ENCODE measurements at regions of chr11 and their contacts with region 1.

Region 1: DNA sequence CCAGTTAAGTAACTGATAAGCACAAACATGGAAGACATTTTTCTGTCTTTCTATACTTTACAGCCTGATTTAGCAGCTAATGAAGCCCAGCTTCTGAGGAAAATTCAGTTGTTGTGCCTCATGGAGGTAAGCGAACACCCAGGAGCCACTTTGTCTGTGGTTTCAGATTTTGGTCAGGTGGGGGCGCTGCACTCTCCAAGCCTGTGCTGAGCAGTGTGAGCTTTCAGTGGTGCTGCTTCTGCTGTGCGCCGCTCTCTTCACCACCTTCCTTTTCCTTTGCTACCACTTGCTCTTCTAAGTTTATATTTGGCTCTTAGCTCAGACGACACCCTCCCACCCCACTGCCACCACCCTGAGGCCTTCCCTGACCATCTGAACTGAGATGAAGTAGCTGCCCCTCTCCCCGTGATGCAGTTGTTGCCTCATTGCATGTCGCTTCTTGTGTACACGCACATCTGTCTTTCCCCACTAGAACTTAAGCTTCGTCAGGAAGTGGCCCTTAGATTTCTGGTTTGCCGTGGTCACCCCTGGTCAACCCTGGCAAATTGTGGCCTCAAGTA is 14.0 kb downstream of the PSMD13 start:
- DNase-seq: peak; percentile 91
- H3K4me3 Mint-ChIP-seq: no peak overlapping the region
- H3K27ac Mint-ChIP-seq: peak overlapping the region; percentile 78
- H3K4me1 Mint-ChIP-seq: peaks cover 16% of the 10 kb centered on the region
- H3K27me3 Mint-ChIP-seq: no peaks in the 10 kb centered on the region

Region 2: DNA sequence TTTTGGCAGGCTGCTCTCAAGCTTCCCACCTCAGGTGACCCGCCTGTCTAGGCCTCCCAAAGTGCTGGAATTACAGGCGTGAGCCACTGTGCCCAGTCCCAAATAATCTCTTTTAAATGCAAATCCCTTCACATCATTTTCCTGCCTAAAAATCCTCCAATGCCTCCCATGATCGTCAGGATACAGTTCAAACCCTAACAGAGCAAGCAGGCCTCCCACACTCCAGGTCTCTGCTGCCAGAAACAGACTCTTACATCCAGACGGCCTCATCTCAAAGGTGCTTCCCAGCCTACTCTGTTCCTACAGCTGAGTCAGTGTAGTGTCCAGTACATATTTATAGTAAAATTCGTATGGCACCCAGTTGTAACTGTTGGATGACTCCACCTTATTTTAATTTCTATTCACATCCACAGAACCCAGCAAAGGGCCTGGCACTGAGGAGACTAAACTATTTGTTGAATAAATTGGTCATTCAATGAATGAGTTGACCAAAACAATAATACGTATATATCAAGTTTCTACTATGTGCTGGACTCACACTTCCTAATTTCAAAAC is 22.9 kb before region 1 on chr11:
- CTCF ChIA-PET with region 1: interaction called, 17 read pairs
- DNase-seq: no peak
- H3K4me3 Mint-ChIP-seq: no peak overlapping the region
- H3K27ac Mint-ChIP-seq: no peak overlapping the region
- H3K4me1 Mint-ChIP-seq: no peaks in the 10 kb centered on the region
- H3K27me3 Mint-ChIP-seq: no peaks in the 10 kb centered on the region

Region 3: DNA sequence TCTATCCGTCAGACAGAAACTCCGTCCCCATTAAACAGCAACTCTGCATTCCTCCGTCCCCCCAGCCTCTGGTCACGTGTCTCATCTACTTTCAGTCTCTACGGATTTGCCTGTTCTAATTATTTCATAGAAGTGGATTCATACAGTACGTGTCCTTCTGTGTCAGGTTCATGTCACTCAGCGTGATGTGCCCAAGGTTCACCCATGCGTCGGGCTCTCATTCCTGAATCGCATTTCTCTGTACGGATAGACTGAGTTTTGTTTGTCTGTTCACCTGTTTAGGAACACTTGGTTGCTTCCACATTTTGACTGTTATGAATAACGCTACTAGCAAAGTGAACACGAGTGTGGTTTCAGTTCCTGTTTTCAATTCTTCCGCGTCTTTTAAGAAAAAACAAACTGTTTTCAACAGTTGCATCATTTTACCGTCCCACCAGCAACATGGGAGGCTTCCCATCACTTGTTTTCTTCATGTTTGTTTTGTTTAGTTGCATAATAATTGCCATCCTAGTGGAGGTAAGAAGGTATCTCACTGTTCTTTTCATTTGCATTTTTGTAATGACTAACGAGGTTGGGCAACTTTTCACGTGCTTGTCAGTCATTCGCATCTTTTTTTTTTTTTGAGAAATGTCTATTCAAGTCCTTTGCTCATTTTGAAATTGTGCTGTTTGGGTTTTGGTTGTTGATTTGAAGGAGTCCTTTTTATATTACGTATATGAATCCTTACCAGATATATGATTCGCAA is 18.5 kb after region 1 on chr11:
- CTCF ChIA-PET with region 1: interaction called, 32 read pairs
- DNase-seq: peak; percentile 73
- H3K4me3 Mint-ChIP-seq: peak overlapping the region; percentile 79
- H3K27ac Mint-ChIP-seq: peak overlapping the region; percentile 99
- H3K4me1 Mint-ChIP-seq: peaks cover 43% of the 10 kb centered on the region
- H3K27me3 Mint-ChIP-seq: peaks cover 29% of the 10 kb centered on the region

Region 4: DNA sequence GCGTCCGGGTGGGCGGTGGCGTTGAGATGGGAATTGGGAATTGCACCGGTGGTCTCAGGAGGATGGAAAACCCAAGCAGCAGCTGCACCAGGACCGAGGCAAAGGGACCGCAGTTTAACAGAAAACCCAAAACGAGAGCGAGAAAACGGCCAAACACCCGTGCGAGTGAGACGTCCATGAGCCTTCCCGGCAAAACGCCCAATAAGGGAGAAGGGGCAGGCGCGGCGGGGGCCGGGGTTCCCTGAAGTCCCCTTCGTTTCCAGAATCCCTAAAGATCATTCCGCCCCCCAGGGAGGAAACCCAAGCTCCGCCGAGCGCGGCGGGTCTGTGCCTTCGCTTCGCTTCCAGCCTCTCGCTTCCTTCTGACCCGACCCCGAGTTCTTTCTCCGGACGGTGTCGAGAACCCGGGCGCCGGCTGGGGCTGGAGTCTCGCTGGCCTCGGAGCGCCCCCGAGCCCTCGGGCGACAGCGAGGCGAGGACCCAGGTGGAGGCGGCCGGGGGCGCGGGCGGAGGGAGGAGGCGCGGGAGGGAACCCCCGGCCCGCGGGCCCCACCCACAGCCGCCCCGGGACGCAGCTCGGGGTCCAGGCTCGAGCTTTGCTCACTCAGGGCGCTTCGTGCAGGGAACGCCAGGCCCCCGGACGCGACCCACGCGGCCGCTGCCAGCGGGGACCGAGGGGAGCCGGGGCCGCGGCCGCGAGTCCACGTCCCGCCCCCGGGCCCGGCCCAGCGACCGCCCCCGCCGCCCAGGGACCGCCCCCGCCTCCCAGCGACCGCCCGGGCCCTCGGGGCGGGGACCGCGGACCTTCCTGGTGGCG is 37.7 kb after region 1 on chr11 and contains the start of gene PGGHG:
- CTCF ChIA-PET with region 1: interaction called, 49 read pairs
- DNase-seq: peak; percentile 81
- H3K4me3 Mint-ChIP-seq: peak within 1 kb of the TSS; percentile 100
- H3K27ac Mint-ChIP-seq: peak within 1 kb of the TSS; percentile 98
- H3K4me1 Mint-ChIP-seq: peaks cover 60% of the 10 kb centered on the region
- H3K27me3 Mint-ChIP-seq: peaks cover 32% of the 10 kb centered on the region

Region 5: GRCh38 chr11:316031-316701 is 65.3 kb after region 1 on chr11:
- CTCF ChIA-PET with region 1: interaction called, 12 read pairs
- DNase-seq: peak; percentile 65
- H3K4me3 Mint-ChIP-seq: peak overlapping the region; percentile 83
- H3K27ac Mint-ChIP-seq: peak overlapping the region; percentile 97
- H3K4me1 Mint-ChIP-seq: peaks cover 40% of the 10 kb centered on the region
- H3K27me3 Mint-ChIP-seq: peaks cover 12% of the 10 kb centered on the region

Region 6: DNA sequence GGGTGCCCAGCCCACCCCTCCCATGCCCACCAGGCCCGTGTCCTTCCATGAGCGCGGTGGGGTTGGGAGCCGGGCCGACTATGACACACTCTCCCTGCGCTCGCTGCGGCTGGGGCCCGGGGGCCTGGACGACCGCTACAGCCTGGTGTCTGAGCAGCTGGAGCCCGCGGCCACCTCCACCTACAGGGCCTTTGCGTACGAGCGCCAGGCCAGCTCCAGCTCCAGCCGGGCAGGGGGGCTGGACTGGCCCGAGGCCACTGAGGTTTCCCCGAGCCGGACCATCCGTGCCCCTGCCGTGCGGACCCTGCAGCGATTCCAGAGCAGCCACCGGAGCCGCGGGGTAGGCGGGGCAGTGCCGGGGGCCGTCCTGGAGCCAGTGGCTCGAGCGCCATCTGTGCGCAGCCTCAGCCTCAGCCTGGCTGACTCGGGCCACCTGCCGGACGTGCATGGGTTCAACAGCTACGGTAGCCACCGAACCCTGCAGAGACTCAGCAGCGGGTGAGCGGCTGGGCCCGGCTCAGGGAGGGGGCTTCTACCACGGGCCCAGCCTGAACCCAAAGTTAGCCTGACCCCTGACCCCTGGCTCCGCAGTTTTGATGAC is 146.2 kb after region 1 on chr11:
- CTCF ChIA-PET with region 1: interaction called, 12 read pairs
- DNase-seq: peak; percentile 67
- H3K4me3 Mint-ChIP-seq: no peak overlapping the region
- H3K27ac Mint-ChIP-seq: no peak overlapping the region
- H3K4me1 Mint-ChIP-seq: no peaks in the 10 kb centered on the region
- H3K27me3 Mint-ChIP-seq: peaks cover 6% of the 10 kb centered on the region

Measured in activated naive CD4-positive, alpha-beta T cell treated with anti-CD3 and anti-CD28 coated beads, Interleukin-2, amount 10 ng/mL, durations not matched to agents 7 days and 5 days (primary cell).